CD4-positive, alpha-beta memory T cell (primary cell): ENCODE measurements at regions of chr16 and their contacts with region 1.

Region 1: DNA sequence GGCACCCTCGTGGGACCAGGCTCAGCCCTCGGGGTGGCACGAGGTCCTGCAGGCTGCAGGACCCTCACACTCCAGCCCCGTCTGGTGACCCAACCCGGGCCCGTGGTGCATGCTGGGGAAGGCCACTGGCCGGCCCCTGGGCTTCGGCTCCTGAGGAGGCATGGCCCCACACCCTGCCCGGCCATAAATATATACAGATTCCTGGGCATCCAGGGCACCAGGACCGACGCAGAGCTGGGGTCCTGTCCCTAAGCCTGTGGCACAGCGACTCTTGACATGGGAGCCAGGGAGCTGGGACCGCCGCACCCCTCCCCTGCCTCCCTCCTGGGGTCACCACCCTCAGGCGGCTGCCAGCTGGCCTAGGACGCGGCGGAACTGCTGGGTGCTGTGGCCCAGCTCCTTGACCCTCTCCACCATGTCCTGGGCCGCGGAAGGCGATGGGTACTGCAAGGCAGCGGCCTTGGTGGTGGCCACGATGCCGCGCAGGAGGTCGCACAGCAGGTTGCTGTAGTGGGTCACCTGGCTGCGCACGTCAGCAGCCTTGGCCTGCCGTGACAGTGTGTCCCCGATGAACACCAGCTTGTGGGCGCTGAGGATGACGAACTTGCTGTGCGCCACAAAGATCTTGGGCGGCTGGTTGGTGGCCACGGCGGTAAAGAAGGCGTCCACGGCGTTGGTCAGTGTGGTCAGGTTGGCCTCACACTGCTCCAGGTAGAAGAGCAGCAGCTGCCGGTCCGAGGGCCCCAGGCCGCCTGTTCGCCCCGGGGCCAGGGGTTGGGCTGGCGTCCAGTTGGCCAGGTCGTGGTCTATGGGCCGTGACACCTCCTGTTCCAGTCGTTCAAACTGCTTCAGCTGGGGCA is 10.6 kb downstream of the CTRB1 start:
- DNase-seq: no peak
- H3K4me3 ChIP-seq: no peak overlapping the region
- H3K4me3 Mint-ChIP-seq: no peak overlapping the region
- H3K27ac ChIP-seq: no peak overlapping the region
- H3K27ac Mint-ChIP-seq: no peak overlapping the region
- H3K4me1 ChIP-seq: peaks cover 6% of the 10 kb centered on the region
- H3K4me1 Mint-ChIP-seq: peaks cover 0 to 5% (median under 1%) of the 10 kb centered on the region in 4 donors
- H3K27me3 ChIP-seq: no peaks in the 10 kb centered on the region
- H3K27me3 Mint-ChIP-seq: peaks cover 0 to 1% of the 10 kb centered on the region in 2 donors

Region 2: GRCh38 chr16:75372236-75372856 is 142.9 kb after region 1 on chr16:
- CTCF ChIA-PET with region 1: interaction called, 296 read pairs
- POLR2A ChIA-PET with region 1: no interaction called
- intact Hi-C with region 1: no loop called
- DNase-seq: no peak
- H3K4me3 ChIP-seq: no peak overlapping the region
- H3K4me3 Mint-ChIP-seq: no peak overlapping the region
- H3K27ac ChIP-seq: no peak overlapping the region
- H3K27ac Mint-ChIP-seq: no peak overlapping the region
- H3K4me1 ChIP-seq: no peaks in the 10 kb centered on the region
- H3K4me1 Mint-ChIP-seq: peaks cover 0 to 6% (median 2%) of the 10 kb centered on the region in 4 donors
- H3K27me3 ChIP-seq: no peaks in the 10 kb centered on the region
- H3K27me3 Mint-ChIP-seq: no peaks in the 10 kb centered on the region

Region 3: GRCh38 chr16:75392911-75393310 is 163.5 kb after region 1 on chr16:
- CTCF ChIA-PET with region 1: interaction called, 296 read pairs
- POLR2A ChIA-PET with region 1: interaction called, 3 read pairs
- intact Hi-C with region 1: no loop called
- DNase-seq: no peak
- H3K4me3 ChIP-seq: no peak overlapping the region
- H3K4me3 Mint-ChIP-seq: no peak overlapping the region
- H3K27ac ChIP-seq: no peak overlapping the region
- H3K27ac Mint-ChIP-seq: peak overlapping the region in 1 of 7 donors; percentile 35
- H3K4me1 ChIP-seq: no peaks in the 10 kb centered on the region
- H3K4me1 Mint-ChIP-seq: peaks cover 5 to 20% (median 13%) of the 10 kb centered on the region in 4 donors
- H3K27me3 ChIP-seq: no peaks in the 10 kb centered on the region
- H3K27me3 Mint-ChIP-seq: no peaks in the 10 kb centered on the region